ENCODE measurements at regions of chr19 and their contacts with region 1.

Region 1: GRCh38 chr19:16628183-16628983 is at the start of gene MED26:
- DNase-seq: peak; percentile 94 to 97
- ATAC-seq: peak; percentile 94 to 99 (median 94)
- H3K4me3 ChIP-seq: peak within 1 kb of the TSS; percentile 79
- H3K4me3 Mint-ChIP-seq: peak within 1 kb of the TSS; percentile 92
- H3K27ac ChIP-seq: peak within 1 kb of the TSS; percentile 77
- H3K27ac Mint-ChIP-seq: peak within 1 kb of the TSS; percentile 85 to 95
- H3K4me1 ChIP-seq: peaks cover 18% of the 10 kb centered on the region
- H3K4me1 Mint-ChIP-seq: peaks cover 28 to 42% of the 10 kb centered on the region in 2 donors
- H3K27me3 ChIP-seq: no peaks in the 10 kb centered on the region
- H3K27me3 Mint-ChIP-seq: no peaks in the 10 kb centered on the region
- CTCF ChIP-seq: no peak
- total RNA-seq, gene MED26: 34.7 to 47.5 (median 47.3) TPM

Region 2: GRCh38 chr19:16572332-16573211 is 55.8 kb before region 1 on chr19 and contains the start of gene SLC35E1:
- intact Hi-C with region 1: loop called (anchors 2 kb)
- DNase-seq: peak; percentile 91 to 95
- ATAC-seq: peak; percentile 89 to 97 (median 94)
- H3K4me3 ChIP-seq: peak within 1 kb of the TSS; percentile 91
- H3K4me3 Mint-ChIP-seq: peak within 1 kb of the TSS; percentile 100
- H3K27ac ChIP-seq: peak within 1 kb of the TSS; percentile 93
- H3K27ac Mint-ChIP-seq: peak within 1 kb of the TSS; percentile 97 to 99
- H3K4me1 ChIP-seq: peaks cover 32% of the 10 kb centered on the region
- H3K4me1 Mint-ChIP-seq: peaks cover 32 to 38% of the 10 kb centered on the region in 2 donors
- H3K27me3 ChIP-seq: no peaks in the 10 kb centered on the region
- H3K27me3 Mint-ChIP-seq: no peaks in the 10 kb centered on the region
- CTCF ChIP-seq: no peak
- total RNA-seq, gene SLC35E1: 53.2 to 55.5 (median 54.2) TPM

Region 3: GRCh38 chr19:16591803-16592556 is 36.4 kb before region 1 on chr19:
- intact Hi-C with region 1: no loop called
- DNase-seq: no peak
- ATAC-seq: no peak
- H3K4me3 ChIP-seq: no peak overlapping the region
- H3K4me3 Mint-ChIP-seq: no peak overlapping the region
- H3K27ac ChIP-seq: no peak overlapping the region
- H3K27ac Mint-ChIP-seq: no peak overlapping the region
- H3K4me1 ChIP-seq: peaks cover 79% of the 10 kb centered on the region
- H3K4me1 Mint-ChIP-seq: peaks cover 62 to 70% of the 10 kb centered on the region in 2 donors
- H3K27me3 ChIP-seq: no peaks in the 10 kb centered on the region
- H3K27me3 Mint-ChIP-seq: no peaks in the 10 kb centered on the region
- CTCF ChIP-seq: no peak

Region 4: GRCh38 chr19:16645140-16645539 is 16.8 kb after region 1 on chr19:
- intact Hi-C with region 1: no loop called
- DNase-seq: no peak
- ATAC-seq: no peak
- H3K4me3 ChIP-seq: no peak overlapping the region
- H3K4me3 Mint-ChIP-seq: no peak overlapping the region
- H3K27ac ChIP-seq: no peak overlapping the region
- H3K27ac Mint-ChIP-seq: no peak overlapping the region
- H3K4me1 ChIP-seq: no peaks in the 10 kb centered on the region
- H3K4me1 Mint-ChIP-seq: peaks cover 0 to 15% of the 10 kb centered on the region in 2 donors
- H3K27me3 ChIP-seq: no peaks in the 10 kb centered on the region
- H3K27me3 Mint-ChIP-seq: no peaks in the 10 kb centered on the region
- CTCF ChIP-seq: no peak

Region 5: GRCh38 chr19:16659831-16660708 is 31.7 kb after region 1 on chr19 and contains the start of gene SMIM7:
- intact Hi-C with region 1: loop called (anchors 1 kb)
- DNase-seq: peak; percentile 97 to 99
- ATAC-seq: peak; percentile 93 to 99 (median 96)
- H3K4me3 ChIP-seq: peak within 1 kb of the TSS; percentile 84
- H3K4me3 Mint-ChIP-seq: peak within 1 kb of the TSS; percentile 97
- H3K27ac ChIP-seq: peak within 1 kb of the TSS; percentile 78
- H3K27ac Mint-ChIP-seq: peak within 1 kb of the TSS; percentile 96 to 97
- H3K4me1 ChIP-seq: peaks cover 35% of the 10 kb centered on the region
- H3K4me1 Mint-ChIP-seq: peaks cover 24 to 34% of the 10 kb centered on the region in 2 donors
- H3K27me3 ChIP-seq: no peaks in the 10 kb centered on the region
- H3K27me3 Mint-ChIP-seq: no peaks in the 10 kb centered on the region
- CTCF ChIP-seq: no peak
- total RNA-seq, gene SMIM7: 63.2 to 88.4 (median 76.0) TPM